ENCODE measurements at regions of chr3 and their contacts with region 1.

Region 1: DNA sequence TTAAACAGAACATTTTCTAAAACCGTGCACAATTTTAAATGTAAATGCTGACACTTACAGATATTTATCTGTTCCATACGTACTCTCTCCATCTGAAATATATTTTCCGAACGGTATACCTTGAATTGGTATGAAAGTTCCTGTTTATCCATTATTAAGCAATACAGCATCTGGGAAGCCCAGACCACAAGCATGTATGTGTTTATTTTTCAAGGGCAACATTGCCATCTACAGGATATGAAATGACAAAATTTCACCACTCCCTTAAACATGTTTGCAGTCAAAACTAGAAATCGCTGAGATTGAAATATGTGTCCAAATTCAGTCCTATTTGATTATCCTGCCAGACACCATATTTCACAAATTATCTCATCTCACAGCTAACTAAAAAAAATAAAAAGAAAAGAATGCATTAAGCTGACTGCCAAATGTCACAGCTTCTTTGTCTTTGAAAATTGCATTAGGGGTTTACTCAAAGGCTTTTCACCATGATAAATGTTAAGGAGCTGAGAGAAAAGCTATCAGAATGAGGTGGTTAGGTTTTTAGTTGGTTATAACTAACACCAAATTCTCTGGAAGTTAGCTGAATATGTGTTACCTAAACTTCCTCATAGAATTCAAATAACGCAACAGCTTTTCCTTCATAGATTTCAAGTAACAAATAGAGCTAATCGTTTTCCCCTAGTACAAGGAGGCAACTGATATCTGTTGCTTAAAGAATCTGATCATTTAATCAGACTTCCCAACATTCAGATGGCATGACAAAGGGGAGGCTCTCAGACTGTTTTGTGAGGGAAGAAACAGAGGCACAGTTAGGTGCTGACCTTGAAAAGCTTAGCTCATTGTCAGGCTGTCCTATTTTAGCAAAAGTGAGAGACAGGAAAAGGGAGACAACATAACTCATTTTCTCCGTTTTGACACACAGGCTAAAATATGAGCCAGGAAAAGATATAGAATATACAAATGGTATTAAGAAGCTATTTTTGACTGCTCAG is 533.1 kb downstream of the TBL1XR1 start:
- DNase-seq: no peak
- ATAC-seq: peak; percentile 86
- H3K4me3 Mint-ChIP-seq: no peak overlapping the region
- H3K27ac Mint-ChIP-seq: peak overlapping the region; percentile 79
- H3K4me1 Mint-ChIP-seq: peaks cover 29% of the 10 kb centered on the region
- H3K27me3 Mint-ChIP-seq: no peaks in the 10 kb centered on the region
- CTCF ChIP-seq: no peak

Region 2: DNA sequence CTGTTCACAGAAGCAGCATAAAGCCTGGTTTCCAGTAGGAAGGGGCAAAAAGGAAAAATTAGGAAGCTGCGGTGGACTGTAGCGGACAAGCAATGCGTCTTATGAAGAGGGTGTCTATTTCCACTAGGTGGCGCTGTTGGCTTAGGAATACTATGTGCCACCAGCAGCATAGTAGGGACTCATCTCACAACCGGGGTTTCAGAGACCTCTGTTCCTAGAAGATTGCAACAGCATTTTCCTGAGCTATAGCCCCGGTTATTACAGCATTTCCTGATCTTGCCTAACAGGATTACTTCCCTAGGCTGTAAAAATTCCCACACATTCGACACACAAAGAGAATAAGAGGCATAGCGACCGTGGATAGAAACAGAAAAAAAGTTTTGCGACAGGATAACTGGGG is 149.8 kb before region 1 on chr3:
- CTCF ChIA-PET with region 1: interaction called, 50 read pairs
- POLR2A ChIA-PET with region 1: no interaction called
- DNase-seq: peak; percentile 75
- ATAC-seq: peak; percentile 97
- H3K4me3 Mint-ChIP-seq: no peak overlapping the region
- H3K27ac Mint-ChIP-seq: peak overlapping the region; percentile 87; the same call in 1 of the 2 replicates
- H3K4me1 Mint-ChIP-seq: peaks cover 13% of the 10 kb centered on the region
- H3K27me3 Mint-ChIP-seq: peaks cover 11% of the 10 kb centered on the region
- CTCF ChIP-seq: peak; percentile 92

Region 3: GRCh38 chr3:176577447-176577846 is 86.7 kb before region 1 on chr3:
- CTCF ChIA-PET with region 1: no interaction called
- POLR2A ChIA-PET with region 1: no interaction called
- DNase-seq: no peak
- ATAC-seq: peak; percentile 65
- H3K4me3 Mint-ChIP-seq: no peak overlapping the region
- H3K27ac Mint-ChIP-seq: no peak overlapping the region
- H3K4me1 Mint-ChIP-seq: peaks cover 18% of the 10 kb centered on the region
- H3K27me3 Mint-ChIP-seq: no peaks in the 10 kb centered on the region
- CTCF ChIP-seq: no peak

Region 4: DNA sequence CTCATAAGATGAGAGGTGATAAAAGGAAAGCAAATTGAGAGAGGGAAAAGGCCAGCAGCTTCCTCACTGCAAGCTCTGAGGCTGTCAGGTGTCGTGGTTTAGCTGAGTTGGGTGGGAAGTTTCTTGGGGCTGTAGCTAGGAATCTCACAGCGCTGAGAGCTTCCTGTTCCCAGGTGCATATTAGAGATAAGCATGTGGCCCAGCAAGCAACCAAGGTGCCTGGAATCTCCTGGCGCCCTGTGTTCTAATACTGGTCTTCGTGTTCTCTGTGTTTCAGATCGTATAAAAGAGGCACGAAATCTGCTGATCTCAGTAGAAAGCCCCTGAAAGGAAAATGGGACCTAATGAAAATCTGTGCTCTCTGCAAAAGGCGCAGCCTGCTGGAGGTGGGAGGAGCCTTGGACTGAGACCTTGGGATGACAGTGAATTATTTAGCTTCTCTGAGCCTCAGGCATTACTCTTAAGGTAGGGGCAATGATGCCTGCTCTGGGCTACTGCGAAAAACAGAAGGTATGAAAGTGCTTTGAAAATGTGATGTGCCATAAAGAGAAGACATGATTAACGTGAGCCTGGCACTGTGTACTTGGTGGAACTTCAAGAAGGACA is 33.3 kb after region 1 on chr3:
- CTCF ChIA-PET with region 1: no interaction called
- POLR2A ChIA-PET with region 1: no interaction called
- DNase-seq: no peak
- ATAC-seq: peak; percentile 80
- H3K4me3 Mint-ChIP-seq: no peak overlapping the region
- H3K27ac Mint-ChIP-seq: no peak overlapping the region
- H3K4me1 Mint-ChIP-seq: peaks cover 14% of the 10 kb centered on the region
- H3K27me3 Mint-ChIP-seq: no peaks in the 10 kb centered on the region
- CTCF ChIP-seq: no peak

Region 5: GRCh38 chr3:176814285-176814684 is 150.2 kb after region 1 on chr3:
- CTCF ChIA-PET with region 1: interaction called, 13 read pairs
- POLR2A ChIA-PET with region 1: no interaction called
- DNase-seq: peak; percentile 87
- ATAC-seq: peak; percentile 100
- H3K4me3 Mint-ChIP-seq: no peak overlapping the region
- H3K27ac Mint-ChIP-seq: no peak overlapping the region
- H3K4me1 Mint-ChIP-seq: peaks cover 7% of the 10 kb centered on the region
- H3K27me3 Mint-ChIP-seq: no peaks in the 10 kb centered on the region
- CTCF ChIP-seq: peak; percentile 54